ENCODE measurements at regions of chr2 and their contacts with region 1.

Region 1: DNA sequence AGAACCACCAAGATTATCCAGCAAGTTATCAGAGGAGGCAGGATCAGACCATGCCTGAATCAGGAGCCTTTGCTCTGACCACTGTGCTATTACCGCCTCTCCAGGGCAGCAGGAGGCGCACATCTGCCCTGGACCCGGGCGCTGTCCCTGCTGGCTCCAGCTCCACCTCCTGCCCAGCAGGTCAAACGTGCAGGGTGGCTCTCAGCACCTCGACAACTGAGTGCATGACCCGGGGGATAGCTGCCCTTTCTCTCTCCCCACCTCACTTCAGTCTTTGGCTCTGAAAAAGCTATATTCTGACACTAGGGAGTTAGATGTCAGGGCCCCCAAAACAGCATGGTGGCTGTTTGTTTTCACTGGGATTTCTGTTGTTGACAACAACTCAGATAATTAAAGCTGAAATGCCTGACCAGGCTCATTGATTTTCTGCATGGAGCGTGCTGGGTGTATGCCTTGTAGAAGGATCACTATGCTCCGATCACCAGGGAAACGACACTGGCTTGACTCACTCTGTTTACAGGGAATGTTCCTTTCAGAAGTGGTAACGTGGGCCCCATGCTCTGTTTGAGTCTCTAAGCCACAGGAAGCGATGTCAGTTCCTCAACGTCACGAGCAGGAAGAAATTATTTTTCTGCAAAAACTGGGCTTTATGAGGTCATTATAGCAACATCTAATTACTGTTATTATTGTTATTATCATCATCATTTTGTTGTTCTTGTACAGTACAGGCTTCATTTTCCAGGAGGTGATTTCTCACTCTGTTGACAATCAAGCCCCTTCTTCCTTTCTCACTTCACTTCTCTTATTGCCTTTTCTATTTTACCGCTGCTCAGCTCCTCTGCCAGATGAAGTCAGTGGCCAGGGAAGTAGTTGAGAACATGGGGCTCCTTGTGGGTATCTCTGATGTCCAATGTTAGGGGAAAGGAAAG is 125.6 kb downstream of the PLB1 start:
- DNase-seq: peak; percentile 60 to 96 (median 78)
- ATAC-seq: peak; percentile 85
- H3K4me3 ChIP-seq: peak overlapping the region; percentile 19 to 33
- H3K4me3 Mint-ChIP-seq: peak overlapping the region; percentile 68
- H3K27ac ChIP-seq: peak overlapping the region; percentile 86 to 98
- H3K27ac Mint-ChIP-seq: peak overlapping the region; percentile 99
- H3K4me1 ChIP-seq: peaks cover 87% of the 10 kb centered on the region
- H3K4me1 Mint-ChIP-seq: peaks cover 92% of the 10 kb centered on the region
- H3K27me3 ChIP-seq: no peaks in the 10 kb centered on the region
- H3K27me3 Mint-ChIP-seq: no peaks in the 10 kb centered on the region
- CTCF ChIP-seq: no peak

Region 2: DNA sequence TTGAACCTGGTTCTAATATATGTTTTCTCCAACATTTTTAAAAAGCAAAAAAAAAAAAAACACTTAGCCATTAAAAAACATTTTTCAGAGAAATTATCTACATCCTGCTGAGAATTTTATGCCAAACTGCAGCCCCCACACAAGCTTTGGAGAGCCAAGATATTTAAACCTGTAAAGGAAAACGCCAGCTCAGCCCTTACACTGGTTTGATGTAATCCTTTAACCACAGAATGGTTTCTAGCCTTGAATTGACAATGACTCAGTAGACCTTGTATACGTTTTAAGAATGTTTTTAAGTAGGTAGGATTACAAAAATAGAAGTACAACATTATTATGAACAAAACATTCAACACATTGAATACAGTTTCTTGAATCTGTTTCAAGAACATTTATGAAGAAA is 617.4 kb before region 1 on chr2:
- CTCF ChIA-PET with region 1: no interaction called
- POLR2A ChIA-PET with region 1: no interaction called
- intact Hi-C with region 1: no loop called
- DNase-seq: peak in 1 of 9 experiments; percentile 14
- ATAC-seq: peak; percentile 57
- H3K4me3 ChIP-seq: no peak overlapping the region
- H3K4me3 Mint-ChIP-seq: no peak overlapping the region
- H3K27ac ChIP-seq: no peak overlapping the region
- H3K27ac Mint-ChIP-seq: no peak overlapping the region
- H3K4me1 ChIP-seq: no peaks in the 10 kb centered on the region
- H3K4me1 Mint-ChIP-seq: peaks cover 13% of the 10 kb centered on the region
- H3K27me3 ChIP-seq: no peaks in the 10 kb centered on the region
- H3K27me3 Mint-ChIP-seq: no peaks in the 10 kb centered on the region
- CTCF ChIP-seq: no peak

Region 3: DNA sequence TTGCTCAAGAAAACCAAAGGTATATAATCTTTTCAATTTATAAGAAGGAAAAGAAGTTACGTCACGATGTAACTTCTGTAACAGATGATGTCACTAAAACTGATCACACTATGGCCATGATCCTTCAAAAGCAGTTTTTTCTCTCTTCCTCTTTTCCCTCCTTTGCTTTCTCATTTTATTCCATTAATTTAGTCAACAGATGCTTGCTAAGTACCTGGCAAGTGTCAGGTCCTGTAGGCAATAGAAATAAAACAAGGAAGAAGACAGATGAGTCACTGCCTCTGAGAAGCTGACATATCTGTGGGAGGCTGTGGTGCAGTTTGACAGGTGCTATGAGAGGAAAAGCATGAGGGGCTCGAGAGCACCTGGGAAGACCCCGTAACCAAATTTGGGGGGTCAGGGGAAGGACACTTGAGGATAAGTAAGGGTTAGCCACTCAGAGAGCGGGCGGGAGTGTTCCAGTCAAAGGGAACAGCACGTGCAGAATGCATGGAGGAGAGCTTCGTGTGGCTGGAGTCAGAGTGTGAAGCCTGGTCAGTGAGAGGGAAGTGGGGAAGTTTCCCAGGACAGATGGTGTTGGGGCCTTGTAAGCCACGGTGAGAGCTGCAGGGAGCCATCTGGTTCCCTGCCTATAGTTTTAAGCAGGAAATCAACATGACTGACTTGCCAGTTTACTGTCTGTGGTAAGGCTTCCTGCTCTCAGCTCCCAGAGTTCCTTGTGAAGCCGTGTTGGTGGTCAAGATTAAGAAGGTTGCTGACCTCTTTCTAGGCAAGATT is 427.6 kb before region 1 on chr2:
- CTCF ChIA-PET with region 1: no interaction called
- POLR2A ChIA-PET with region 1: no interaction called
- intact Hi-C with region 1: no loop called
- DNase-seq: no peak
- ATAC-seq: no peak
- H3K4me3 ChIP-seq: no peak overlapping the region
- H3K4me3 Mint-ChIP-seq: no peak overlapping the region
- H3K27ac ChIP-seq: no peak overlapping the region
- H3K27ac Mint-ChIP-seq: no peak overlapping the region
- H3K4me1 ChIP-seq: no peaks in the 10 kb centered on the region
- H3K4me1 Mint-ChIP-seq: no peaks in the 10 kb centered on the region
- H3K27me3 ChIP-seq: no peaks in the 10 kb centered on the region
- H3K27me3 Mint-ChIP-seq: no peaks in the 10 kb centered on the region
- CTCF ChIP-seq: no peak

Region 4: DNA sequence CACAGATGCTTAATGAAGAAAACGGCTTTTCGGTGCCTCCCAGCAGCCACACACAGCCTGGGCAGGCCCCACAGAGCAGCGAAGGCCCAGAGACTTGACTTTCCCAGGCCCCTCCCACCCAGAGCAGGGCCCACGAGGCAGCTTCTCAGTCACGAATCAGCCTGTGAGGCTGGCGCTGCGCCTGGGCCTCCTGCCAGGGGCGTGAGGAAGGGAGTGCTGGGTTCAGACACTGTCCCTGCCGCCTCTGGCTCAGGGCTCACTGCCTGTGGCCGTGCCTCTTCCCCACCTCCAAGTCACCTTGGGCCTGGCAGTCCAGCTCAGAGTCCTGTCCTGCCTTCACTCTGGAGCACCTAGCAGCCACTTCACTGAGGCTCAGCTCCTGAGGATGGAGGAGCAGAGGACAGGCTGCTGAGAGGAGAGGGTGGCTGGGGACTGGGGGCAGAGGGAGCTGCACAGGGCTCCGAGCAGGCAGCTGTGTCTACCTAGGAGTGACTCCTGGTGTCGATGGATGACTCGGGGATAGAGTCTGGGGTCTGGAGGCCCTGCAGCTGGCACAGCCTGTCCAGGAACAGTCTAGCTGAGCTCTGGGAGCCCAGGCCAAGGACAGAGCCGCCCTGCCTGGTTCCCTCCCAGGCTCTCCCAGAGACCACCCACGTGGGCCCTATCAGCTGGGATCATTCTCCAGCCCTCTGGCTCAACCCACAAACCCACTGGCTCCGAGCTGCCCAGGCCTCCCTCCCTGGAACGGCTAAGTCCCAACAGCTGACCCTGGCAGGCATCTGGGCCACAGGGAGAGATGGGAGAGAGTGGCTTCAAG is 265.1 kb before region 1 on chr2:
- CTCF ChIA-PET with region 1: no interaction called
- POLR2A ChIA-PET with region 1: no interaction called
- intact Hi-C with region 1: no loop called
- DNase-seq: peak in 4 of 9 experiments; percentile 43 to 79 (median 64)
- ATAC-seq: no peak
- H3K4me3 ChIP-seq: no peak overlapping the region
- H3K4me3 Mint-ChIP-seq: no peak overlapping the region
- H3K27ac ChIP-seq: peak overlapping the region in 1 of 2 experiments; percentile 46
- H3K27ac Mint-ChIP-seq: peak overlapping the region; percentile 41
- H3K4me1 ChIP-seq: peaks cover 36% of the 10 kb centered on the region
- H3K4me1 Mint-ChIP-seq: peaks cover 34% of the 10 kb centered on the region
- H3K27me3 ChIP-seq: no peaks in the 10 kb centered on the region
- H3K27me3 Mint-ChIP-seq: no peaks in the 10 kb centered on the region
- CTCF ChIP-seq: no peak

Region 5: DNA sequence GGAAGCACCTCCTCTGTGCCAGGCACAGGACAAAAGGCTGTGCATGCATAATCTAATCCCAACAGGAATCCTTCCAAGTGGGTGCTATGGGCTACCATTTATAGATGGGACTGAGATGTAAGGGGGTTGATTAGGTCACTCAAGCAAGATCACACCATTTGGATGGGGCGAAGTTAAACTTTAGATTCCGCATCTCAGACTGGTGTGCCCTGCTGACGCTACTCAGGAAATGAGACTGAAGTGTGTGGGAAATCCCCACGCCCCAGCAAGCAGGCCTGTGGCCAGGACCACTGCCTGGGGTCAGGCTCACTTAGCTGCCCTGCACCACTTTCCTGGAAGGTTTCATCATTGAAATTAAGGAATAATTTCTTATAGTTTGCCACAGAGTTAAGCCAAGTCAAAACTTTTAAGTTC is 59.7 kb after region 1 on chr2:
- CTCF ChIA-PET with region 1: interaction called, 4 read pairs
- POLR2A ChIA-PET with region 1: no interaction called
- intact Hi-C with region 1: loop called in 1 of 2 experiments (anchors 5 kb)
- DNase-seq: peak; percentile 14 to 89 (median 57)
- ATAC-seq: peak; percentile 86
- H3K4me3 ChIP-seq: no peak overlapping the region
- H3K4me3 Mint-ChIP-seq: peak overlapping the region; percentile 9
- H3K27ac ChIP-seq: peak overlapping the region in 1 of 2 experiments; percentile 33
- H3K27ac Mint-ChIP-seq: peak overlapping the region; percentile 9
- H3K4me1 ChIP-seq: peaks cover 17% of the 10 kb centered on the region
- H3K4me1 Mint-ChIP-seq: peaks cover 21% of the 10 kb centered on the region
- H3K27me3 ChIP-seq: no peaks in the 10 kb centered on the region
- H3K27me3 Mint-ChIP-seq: no peaks in the 10 kb centered on the region
- CTCF ChIP-seq: no peak